ENCODE measurements at regions of chr17 and their contacts with region 1.

Region 1: GRCh38 chr17:7687908-7688807 is at the start of gene WRAP53:
- DNase-seq: peak; percentile 98 to 99
- ATAC-seq: peak; percentile 86 to 88
- H3K4me3 ChIP-seq: peak within 1 kb of the TSS; percentile 80 to 96 (median 90)
- H3K27ac ChIP-seq: peak within 1 kb of the TSS; percentile 94 to 97 (median 94)
- H3K4me1 ChIP-seq: peaks cover 26 to 34% of the 10 kb centered on the region in 2 donors
- H3K27me3 ChIP-seq: no peaks in the 10 kb centered on the region
- CTCF ChIP-seq: peak; percentile 96 to 100 (median 98)
- POLR2A ChIP-seq: peak in 1 of 2 donors; percentile 36
- total RNA-seq, gene WRAP53: 2.6 to 5.8 (median 3.7) TPM

Region 2: DNA sequence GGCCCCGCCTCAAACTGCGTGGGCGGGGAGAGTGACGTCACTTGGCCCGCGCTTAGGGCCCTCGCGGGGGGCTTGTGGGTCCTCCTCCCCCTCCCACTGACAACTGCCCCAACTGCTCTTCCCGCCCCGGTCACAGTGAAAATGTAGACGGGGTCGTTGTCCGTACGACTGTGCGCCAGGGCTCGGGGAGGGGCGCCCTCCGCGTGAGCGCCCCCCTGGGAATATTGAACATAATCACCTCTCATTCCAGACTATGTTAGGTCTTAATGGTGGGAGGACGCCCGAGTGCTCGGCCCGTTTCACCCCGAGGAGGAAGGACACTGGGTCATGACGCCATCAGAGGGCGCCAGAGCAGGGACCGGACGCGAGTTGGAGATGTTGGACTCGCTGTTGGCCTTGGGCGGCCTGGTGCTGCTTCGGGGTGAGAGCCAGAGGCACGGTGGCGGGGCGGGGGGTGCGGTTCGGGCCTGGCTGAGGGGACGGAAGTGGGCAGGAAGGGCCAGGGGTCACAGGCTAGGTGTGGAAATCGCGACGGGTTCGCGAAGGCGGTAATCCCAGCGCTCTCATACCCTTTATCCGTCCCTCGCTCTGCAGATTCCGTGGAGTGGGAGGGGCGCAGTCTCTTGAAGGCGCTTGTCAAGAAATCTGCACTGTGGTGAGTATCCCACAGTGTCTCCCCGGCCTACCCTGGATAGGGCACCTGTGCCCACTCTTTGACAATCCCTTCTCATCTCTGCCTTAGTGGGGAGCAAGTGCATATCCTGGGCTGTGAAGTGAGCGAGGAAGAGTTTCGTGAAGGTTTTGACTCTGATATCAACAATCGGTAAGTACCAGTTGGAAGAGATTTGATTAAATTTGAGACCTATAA is 435.7 kb before region 1 on chr17 and contains the start of gene ELP5:
- in situ Hi-C with region 1: no loop called
- intact Hi-C with region 1: loop called (anchors 5 kb)
- DNase-seq: peak; percentile 86 to 92
- ATAC-seq: peak; percentile 58 to 61
- H3K4me3 ChIP-seq: peak within 1 kb of the TSS; percentile 69 to 98 (median 81)
- H3K27ac ChIP-seq: peak within 1 kb of the TSS; percentile 98 to 100 (median 98)
- H3K4me1 ChIP-seq: peaks cover 39 to 43% of the 10 kb centered on the region in 2 donors
- H3K27me3 ChIP-seq: no peaks in the 10 kb centered on the region
- CTCF ChIP-seq: peak in 3 of 5 experiments; percentile 36 to 54 (median 40)
- POLR2A ChIP-seq: peak in 1 of 2 donors; percentile 70
- total RNA-seq, gene ELP5: 13.3 to 52.7 (median 26.7) TPM

Region 3: GRCh38 chr17:7403977-7404736 is 284.0 kb before region 1 on chr17 and contains the start of gene TMEM256:
- in situ Hi-C with region 1: no loop called
- intact Hi-C with region 1: loop called (anchors 10 kb)
- DNase-seq: peak; percentile 100
- ATAC-seq: peak; percentile 90
- H3K4me3 ChIP-seq: peak within 1 kb of the TSS; percentile 62 to 81 (median 70)
- H3K27ac ChIP-seq: peak within 1 kb of the TSS; percentile 92 to 97 (median 92)
- H3K4me1 ChIP-seq: peaks cover 19 to 20% of the 10 kb centered on the region in 2 donors
- H3K27me3 ChIP-seq: no peaks in the 10 kb centered on the region
- CTCF ChIP-seq: peak in 2 of 5 experiments; percentile 13 to 22
- POLR2A ChIP-seq: peak; percentile 94 to 96
- total RNA-seq, gene TMEM256: 28.9 to 65.6 (median 50.2) TPM

Region 4: DNA sequence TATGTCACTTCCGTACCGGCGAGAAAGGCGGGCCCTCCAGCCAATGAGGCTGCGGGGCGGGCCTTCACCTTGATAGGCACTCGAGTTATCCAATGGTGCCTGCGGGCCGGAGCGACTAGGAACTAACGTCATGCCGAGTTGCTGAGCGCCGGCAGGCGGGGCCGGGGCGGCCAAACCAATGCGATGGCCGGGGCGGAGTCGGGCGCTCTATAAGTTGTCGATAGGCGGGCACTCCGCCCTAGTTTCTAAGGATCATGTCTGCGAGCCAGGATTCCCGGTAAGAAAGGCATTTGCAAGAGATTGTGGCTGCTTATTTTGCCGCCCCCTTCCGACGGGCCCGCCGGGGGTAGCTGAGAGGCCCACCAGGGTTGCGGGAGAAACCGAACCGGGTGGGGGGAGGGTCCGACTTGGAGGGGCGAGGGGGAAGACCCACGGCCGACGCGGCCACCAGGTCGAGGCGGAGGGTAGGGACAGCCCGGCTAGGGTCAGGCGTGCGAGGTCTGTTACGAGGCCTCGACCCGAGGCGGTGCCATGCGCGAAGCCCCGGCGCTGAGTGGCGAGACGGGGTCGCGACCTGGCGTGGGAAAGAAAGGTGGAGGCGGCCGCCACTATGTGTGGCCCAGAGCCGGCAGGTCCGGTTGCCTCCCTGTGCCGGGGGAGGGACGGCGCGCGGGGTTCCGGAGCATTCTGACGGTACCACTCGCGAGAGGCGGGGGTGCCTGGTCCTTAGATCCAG is 115.4 kb before region 1 on chr17:
- in situ Hi-C with region 1: no loop called
- intact Hi-C with region 1: loop called (anchors 2 kb)
- DNase-seq: peak; percentile 99 to 100
- ATAC-seq: peak; percentile 14 to 83
- H3K4me3 ChIP-seq: peak overlapping the region; percentile 90 to 100 (median 95)
- H3K27ac ChIP-seq: peak overlapping the region; percentile 98 to 100 (median 99)
- H3K4me1 ChIP-seq: peaks cover 37 to 42% of the 10 kb centered on the region in 2 donors
- H3K27me3 ChIP-seq: no peaks in the 10 kb centered on the region
- CTCF ChIP-seq: no peak
- POLR2A ChIP-seq: peak; percentile 98 to 99

Region 5: GRCh38 chr17:7627250-7628121 is 60.7 kb before region 1 on chr17 and contains the start of gene SAT2:
- in situ Hi-C with region 1: loop called in 3 of 4 experiments (anchors 5 kb)
- intact Hi-C with region 1: loop called (anchors 1 kb)
- DNase-seq: peak; percentile 96 to 98
- ATAC-seq: peak; percentile 97 to 98
- H3K4me3 ChIP-seq: peak within 1 kb of the TSS; percentile 74 to 90 (median 80)
- H3K27ac ChIP-seq: peak within 1 kb of the TSS; percentile 93 to 99 (median 96)
- H3K4me1 ChIP-seq: peaks cover 8 to 10% of the 10 kb centered on the region in 2 donors
- H3K27me3 ChIP-seq: no peaks in the 10 kb centered on the region
- CTCF ChIP-seq: no peak
- POLR2A ChIP-seq: peak; percentile 79 to 91
- total RNA-seq, gene SAT2: 38.4 to 79.4 (median 60.4) TPM

Region 6: GRCh38 chr17:7650509-7651096 is 37.6 kb before region 1 on chr17 and contains the start of gene ATP1B2:
- in situ Hi-C with region 1: no loop called
- intact Hi-C with region 1: loop called (anchors 1 kb)
- DNase-seq: peak; percentile 19 to 42
- ATAC-seq: peak; percentile 43 to 57
- H3K4me3 ChIP-seq: peak within 1 kb of the TSS; percentile 47 to 59 (median 56)
- H3K27ac ChIP-seq: peak within 1 kb of the TSS; percentile 27 to 58 (median 48)
- H3K4me1 ChIP-seq: peaks cover 7 to 17% of the 10 kb centered on the region in 2 donors
- H3K27me3 ChIP-seq: peaks cover 42 to 52% (median 47%) of the 10 kb centered on the region in 3 donors
- CTCF ChIP-seq: no peak
- POLR2A ChIP-seq: no peak
- total RNA-seq, gene ATP1B2: 0.10 to 0.81 (median 0.21) TPM